ENCODE measurements at regions of chr6 and their contacts with region 1.

Region 1: DNA sequence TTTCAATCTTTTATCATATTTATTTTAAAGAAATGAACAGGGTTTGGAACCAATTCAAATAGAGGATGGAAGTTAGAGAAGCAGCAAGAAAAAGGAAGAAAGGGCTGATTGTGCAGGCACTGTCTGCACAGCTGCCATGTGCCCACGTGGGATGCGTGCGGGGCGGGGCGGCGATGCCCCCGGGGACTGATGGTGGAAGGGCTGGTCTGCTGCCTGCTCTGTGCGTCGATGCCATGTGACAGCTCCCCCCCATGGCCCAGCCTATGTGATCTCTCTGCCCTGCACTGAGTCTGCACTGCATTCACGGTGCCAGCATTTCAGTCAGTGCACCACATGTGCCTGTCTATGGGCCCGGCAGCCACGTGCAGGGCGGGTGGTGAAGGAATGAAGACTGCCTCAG is 96.4 kb downstream of the IRF4 start:
- DNase-seq: no peak
- ATAC-seq: no peak
- H3K4me3 ChIP-seq: no peak overlapping the region
- H3K27ac ChIP-seq: no peak overlapping the region
- H3K4me1 ChIP-seq: no peaks in the 10 kb centered on the region
- H3K27me3 ChIP-seq: no peaks in the 10 kb centered on the region
- CTCF ChIP-seq: no peak
- POLR2A ChIP-seq: no peak
- RAD21 ChIP-seq: no peak

Region 2: GRCh38 chr6:336159-337019 is 151.6 kb before region 1 on chr6:
- CTCF ChIA-PET with region 1: no interaction called
- POLR2A ChIA-PET with region 1: no interaction called
- dilution Hi-C with region 1: no loop called
- in situ Hi-C with region 1: no loop called
- intact Hi-C with region 1: loop called (anchors 5 kb)
- DNase-seq: no peak
- ATAC-seq: no peak
- H3K4me3 ChIP-seq: no peak overlapping the region
- H3K27ac ChIP-seq: no peak overlapping the region
- H3K4me1 ChIP-seq: no peaks in the 10 kb centered on the region
- H3K27me3 ChIP-seq: no peaks in the 10 kb centered on the region
- CTCF ChIP-seq: no peak
- POLR2A ChIP-seq: no peak
- RAD21 ChIP-seq: no peak

Measured in IMR-90 (cell line).